ENCODE measurements at regions of chr7 and their contacts with region 1.

Region 1: GRCh38 chr7:22559829-22560489 is 60.0 kb upstream of the STEAP1B start:
- DNase-seq: peak; percentile 76
- ATAC-seq: peak; percentile 74
- H3K4me3 Mint-ChIP-seq: no peak overlapping the region
- H3K27ac Mint-ChIP-seq: peak overlapping the region; percentile 55; the same call in 1 of the 2 replicates
- H3K4me1 Mint-ChIP-seq: peaks cover 65% of the 10 kb centered on the region
- H3K27me3 Mint-ChIP-seq: no peaks in the 10 kb centered on the region
- CTCF ChIP-seq: peak; percentile 65

Region 2: GRCh38 chr7:21869785-21870402 is 690.1 kb before region 1 on chr7:
- CTCF ChIA-PET with region 1: no interaction called
- POLR2A ChIA-PET with region 1: no interaction called
- DNase-seq: no peak
- ATAC-seq: peak; percentile 45
- H3K4me3 Mint-ChIP-seq: no peak overlapping the region
- H3K27ac Mint-ChIP-seq: peak overlapping the region; percentile 92
- H3K4me1 Mint-ChIP-seq: peaks cover 79% of the 10 kb centered on the region
- H3K27me3 Mint-ChIP-seq: no peaks in the 10 kb centered on the region
- CTCF ChIP-seq: no peak

Region 3: GRCh38 chr7:22601812-22602565 is 42.0 kb after region 1 on chr7:
- CTCF ChIA-PET with region 1: no interaction called
- POLR2A ChIA-PET with region 1: no interaction called
- DNase-seq: no peak
- ATAC-seq: no peak
- H3K4me3 Mint-ChIP-seq: no peak overlapping the region
- H3K27ac Mint-ChIP-seq: no peak overlapping the region
- H3K4me1 Mint-ChIP-seq: peaks cover 18% of the 10 kb centered on the region
- H3K27me3 Mint-ChIP-seq: no peaks in the 10 kb centered on the region
- CTCF ChIP-seq: no peak

Region 4: DNA sequence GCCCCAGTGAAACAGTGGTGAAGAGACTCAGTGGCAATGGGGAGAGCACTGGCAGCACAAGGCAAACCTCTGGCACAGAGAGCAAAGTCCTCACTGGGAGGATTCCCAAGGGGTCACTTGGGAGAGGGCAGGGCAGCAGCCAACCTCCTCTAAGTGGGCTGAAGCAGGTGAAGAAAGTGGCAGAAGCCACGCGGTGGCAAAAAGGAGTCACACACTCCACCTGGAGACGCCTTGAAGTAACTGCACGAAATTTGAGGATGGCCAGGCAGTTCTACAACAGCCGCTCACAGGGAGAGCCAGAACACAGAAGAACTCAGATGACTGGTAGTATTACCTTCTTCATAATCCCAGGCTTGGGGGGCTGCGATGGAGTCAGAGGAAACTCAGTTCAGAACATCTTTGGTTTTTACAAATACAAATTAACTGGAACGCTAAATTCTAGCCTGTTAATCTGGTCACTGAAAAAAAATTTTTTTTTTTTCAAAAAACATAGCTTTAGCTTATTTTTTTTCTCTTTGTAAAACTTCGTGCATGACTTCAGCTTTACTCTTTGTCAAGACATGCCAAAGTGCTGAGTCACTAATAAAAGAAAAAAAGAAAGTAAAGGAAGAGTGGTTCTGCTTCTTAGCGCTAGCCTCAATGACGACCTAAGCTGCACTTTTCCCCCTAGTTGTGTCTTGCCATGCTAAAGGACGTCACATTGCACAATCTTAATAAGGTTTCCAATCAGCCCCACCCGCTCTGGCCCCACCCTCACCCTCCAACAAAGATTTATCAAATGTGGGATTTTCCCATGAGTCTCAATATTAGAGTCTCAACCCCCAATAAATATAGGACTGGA is 166.6 kb after region 1 on chr7:
- CTCF ChIA-PET with region 1: interaction called, 197 read pairs
- POLR2A ChIA-PET with region 1: interaction called, 4 read pairs
- DNase-seq: peak; percentile 58
- ATAC-seq: peak; percentile 85
- H3K4me3 Mint-ChIP-seq: peak overlapping the region; percentile 22; the same call in 1 of the 2 replicates
- H3K27ac Mint-ChIP-seq: peak overlapping the region; percentile 31; the same call in 1 of the 2 replicates
- H3K4me1 Mint-ChIP-seq: peaks cover 42% of the 10 kb centered on the region
- H3K27me3 Mint-ChIP-seq: peaks cover 4% of the 10 kb centered on the region
- CTCF ChIP-seq: peak; percentile 39; the same call in 1 of the 2 replicates

Region 5: GRCh38 chr7:22782616-22783232 is 222.8 kb after region 1 on chr7:
- CTCF ChIA-PET with region 1: interaction called, 52 read pairs
- POLR2A ChIA-PET with region 1: no interaction called
- DNase-seq: peak; percentile 84
- ATAC-seq: peak; percentile 96
- H3K4me3 Mint-ChIP-seq: no peak overlapping the region
- H3K27ac Mint-ChIP-seq: no peak overlapping the region
- H3K4me1 Mint-ChIP-seq: peaks cover 17% of the 10 kb centered on the region
- H3K27me3 Mint-ChIP-seq: no peaks in the 10 kb centered on the region
- CTCF ChIP-seq: peak; percentile 73

Region 6: GRCh38 chr7:22860784-22861482 is 301.0 kb after region 1 on chr7:
- CTCF ChIA-PET with region 1: interaction called, 18 read pairs
- POLR2A ChIA-PET with region 1: no interaction called
- DNase-seq: peak; percentile 32
- ATAC-seq: peak; percentile 16; the same call in 1 of the 2 replicates
- H3K4me3 Mint-ChIP-seq: no peak overlapping the region
- H3K27ac Mint-ChIP-seq: peak overlapping the region; percentile 85
- H3K4me1 Mint-ChIP-seq: peaks cover 55% of the 10 kb centered on the region
- H3K27me3 Mint-ChIP-seq: no peaks in the 10 kb centered on the region
- CTCF ChIP-seq: peak; percentile 60

Measured in WTC11 (cell line).